Motor neuron (in vitro differentiated cells): ENCODE measurements at regions of chr1 and their contacts with region 1.

Region 1: GRCh38 chr1:201783572-201783971 is 45.4 kb upstream of the IPO9 start:
- ATAC-seq: peak in 1 of 8 experiments; percentile 41
- H3K4me3 ChIP-seq: no peak overlapping the region
- H3K27ac ChIP-seq: no peak overlapping the region
- H3K4me1 ChIP-seq: no peaks in the 10 kb centered on the region

Region 2: DNA sequence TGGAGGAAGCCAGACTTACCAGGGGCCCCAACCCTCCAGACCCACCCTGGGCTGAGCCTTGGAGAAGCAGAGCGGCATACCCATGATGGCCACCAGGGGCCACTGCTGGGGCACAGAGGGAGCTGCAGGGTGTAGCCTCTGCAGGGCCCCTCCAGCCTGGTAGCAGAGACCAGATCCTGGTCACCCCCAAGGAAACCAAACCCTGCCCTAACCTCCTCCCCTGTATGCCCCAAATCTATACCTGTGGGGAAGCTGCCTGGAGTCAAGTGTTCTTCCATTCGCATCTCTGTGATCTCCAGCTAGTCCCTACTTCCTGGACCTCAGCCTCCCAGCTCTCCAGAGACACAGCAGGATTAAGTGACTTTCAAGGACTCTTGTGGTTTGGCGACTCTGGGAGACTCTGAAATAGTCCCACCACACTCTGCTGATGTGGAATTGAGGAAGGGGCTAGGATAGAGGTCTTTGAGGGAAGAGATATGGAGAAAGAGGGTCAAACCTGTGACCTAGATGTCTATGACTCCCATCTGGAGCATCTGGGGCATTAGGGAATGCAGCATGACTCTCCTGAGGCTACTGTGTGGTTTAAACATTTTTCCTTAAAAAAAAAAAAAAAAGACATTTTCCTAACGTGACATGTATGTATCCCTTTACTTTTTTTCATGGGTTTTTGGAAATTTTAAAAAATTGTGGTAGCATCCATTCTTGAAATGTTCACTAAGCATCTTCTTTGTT is 73.8 kb before region 1 on chr1:
- in situ Hi-C with region 1: loop called in 1 of 9 experiments (anchors 10 kb)
- ATAC-seq: peak; percentile 33 to 88 (median 73)
- H3K4me3 ChIP-seq: no peak overlapping the region
- H3K27ac ChIP-seq: no peak overlapping the region
- H3K4me1 ChIP-seq: peaks cover 7 to 16% of the 10 kb centered on the region in 2 donors